ENCODE measurements at regions of chr2 and their contacts with region 1.

Region 1: DNA sequence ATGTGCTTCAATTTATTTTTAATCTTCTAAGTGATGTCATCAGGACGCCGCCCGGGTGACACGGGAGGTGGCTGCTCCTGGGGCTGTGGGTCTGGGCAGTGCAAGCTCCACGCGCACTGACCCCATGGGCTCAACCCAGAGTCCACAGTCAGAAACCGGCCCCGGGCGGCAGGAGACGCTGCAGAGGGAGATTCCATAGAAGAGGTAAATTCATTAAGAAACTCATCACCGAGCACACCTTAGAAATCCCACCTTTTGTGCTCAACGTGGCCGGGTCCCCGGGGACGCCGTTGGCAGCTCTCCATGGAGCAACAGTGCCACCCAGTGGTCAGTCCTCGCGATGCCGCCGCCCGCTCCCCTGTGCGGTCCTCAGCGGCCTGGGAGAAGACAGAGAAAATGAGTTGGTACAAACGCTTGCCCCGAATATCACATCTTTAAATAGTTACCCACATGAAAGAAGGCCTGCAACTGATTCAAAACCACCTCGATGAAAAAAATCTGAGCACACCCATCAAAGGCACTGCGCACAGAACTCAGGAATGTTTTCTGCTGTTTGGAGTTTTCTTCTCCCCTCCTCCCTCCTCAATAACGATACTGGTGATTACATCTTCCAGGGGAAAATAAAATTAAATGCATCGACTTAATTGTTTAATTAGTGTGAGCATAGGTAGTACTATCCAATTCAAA is 92.6 kb downstream of the CMPK2 start:
- DNase-seq: peak; percentile 46 to 96 (median 79)

Region 2: DNA sequence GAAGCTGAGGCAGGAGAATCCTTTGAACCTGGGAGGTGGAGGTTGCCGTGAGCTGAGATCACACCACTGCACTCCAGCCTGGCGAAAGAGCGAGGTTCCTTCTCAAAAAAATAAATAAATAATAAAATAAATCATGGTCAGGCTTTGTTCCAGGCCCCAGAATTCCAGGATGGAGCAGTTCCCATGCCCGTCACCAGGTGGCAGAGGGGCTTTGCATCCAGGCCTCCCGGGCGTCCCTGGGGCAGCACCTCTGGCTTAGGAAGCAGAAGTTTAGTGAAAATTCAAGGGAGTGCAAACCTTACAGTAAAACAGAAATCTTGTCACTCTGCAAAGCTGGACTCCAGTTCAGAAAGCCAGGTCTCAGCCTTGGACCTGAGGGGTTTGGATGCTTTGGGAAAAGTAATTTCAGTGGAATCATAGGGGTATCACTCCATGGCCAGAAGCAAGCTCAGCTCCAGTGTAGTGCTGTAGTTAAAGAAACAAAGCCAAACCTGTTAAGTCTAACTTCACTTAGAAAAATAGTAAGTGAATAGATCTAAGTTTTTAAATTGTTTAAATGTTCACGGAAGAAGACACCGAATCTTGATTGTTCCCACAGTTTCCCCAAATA is 420.1 kb before region 1 on chr2:
- intact Hi-C with region 1: loop called (anchors 1 kb)
- DNase-seq: peak in 6 of 10 donors; percentile 11 to 90 (median 43)

Measured in posterior cingulate gyrus (tissue), 11 donors.